Mammary epithelial cell (primary cell): ENCODE measurements at regions of chr1 and their contacts with region 1.

Region 1: GRCh38 chr1:47823040-47823808 is 174.0 kb downstream of the TRABD2B start:
- DNase-seq: no peak
- H3K4me3 ChIP-seq: no peak overlapping the region
- H3K27ac ChIP-seq: no peak overlapping the region
- H3K4me1 ChIP-seq: no peaks in the 10 kb centered on the region
- H3K27me3 ChIP-seq: no peaks in the 10 kb centered on the region
- CTCF ChIP-seq: no peak

Region 2: DNA sequence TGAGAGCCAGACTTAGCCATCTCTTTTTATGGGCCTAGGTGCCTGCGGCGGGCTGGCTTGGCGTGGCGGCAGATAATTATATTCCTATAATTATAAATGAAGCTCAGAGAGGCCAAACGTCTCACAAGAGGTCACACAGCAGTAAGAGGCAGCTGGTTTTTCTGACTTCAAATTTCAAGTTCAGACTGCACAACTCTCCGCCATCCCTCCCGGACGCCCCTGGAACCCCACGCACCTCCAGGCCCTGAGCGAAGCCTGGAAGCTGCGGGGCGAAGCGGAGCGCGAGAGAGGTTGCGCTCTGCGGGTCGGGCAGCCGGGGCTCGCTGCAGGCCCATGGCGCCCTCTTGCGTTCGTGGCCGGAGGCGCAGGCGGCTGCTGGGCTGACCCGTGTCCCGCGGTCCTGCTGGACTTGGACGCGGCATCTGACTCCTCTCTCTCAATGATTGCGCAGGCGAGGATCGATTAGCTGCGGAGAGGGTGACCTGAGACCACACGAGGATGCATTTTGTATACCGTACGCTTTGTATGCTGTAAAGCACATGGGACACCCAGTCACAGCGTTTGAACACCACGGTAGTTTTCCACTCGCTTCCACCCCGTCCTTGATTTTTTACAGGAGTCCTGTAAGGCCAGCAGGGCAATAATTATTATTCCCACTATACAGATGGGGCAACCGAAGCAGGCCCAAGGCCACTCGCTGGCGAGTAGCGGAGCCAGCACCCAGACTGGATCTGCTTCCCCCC is 112.7 kb before region 1 on chr1:
- CTCF ChIA-PET with region 1: no interaction called
- dilution Hi-C with region 1: no loop called
- in situ Hi-C with region 1: no loop called
- intact Hi-C with region 1: no loop called
- DNase-seq: peak; percentile 41
- H3K4me3 ChIP-seq: no peak overlapping the region
- H3K27ac ChIP-seq: no peak overlapping the region
- H3K4me1 ChIP-seq: peaks cover 23% of the 10 kb centered on the region
- H3K27me3 ChIP-seq: peaks cover 29% of the 10 kb centered on the region
- CTCF ChIP-seq: peak; percentile 87 to 100

Region 3: DNA sequence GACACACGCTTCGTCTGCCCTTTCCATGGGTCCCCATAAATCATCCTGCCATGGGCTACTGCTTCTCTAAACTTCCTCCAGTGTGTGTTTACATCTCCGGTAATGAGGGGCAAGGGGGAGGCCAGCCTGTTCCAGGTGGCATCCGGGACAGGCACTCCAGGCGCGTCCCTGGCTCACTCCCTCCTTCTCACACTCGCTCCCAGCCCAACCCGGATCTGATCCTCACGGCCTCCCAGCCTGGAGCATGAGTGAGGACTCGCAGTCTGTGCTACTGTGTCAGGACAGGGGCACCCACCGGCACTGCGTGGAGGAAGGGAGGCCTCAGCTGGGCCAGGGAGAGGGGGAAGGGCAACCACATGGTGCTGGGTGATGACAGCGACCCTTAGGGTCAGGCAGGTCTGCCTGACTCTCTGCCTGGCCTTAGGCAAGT is 51.5 kb before region 1 on chr1:
- CTCF ChIA-PET with region 1: no interaction called
- dilution Hi-C with region 1: loop called (anchors 5 kb)
- in situ Hi-C with region 1: no loop called
- intact Hi-C with region 1: no loop called
- DNase-seq: no peak
- H3K4me3 ChIP-seq: no peak overlapping the region
- H3K27ac ChIP-seq: no peak overlapping the region
- H3K4me1 ChIP-seq: no peaks in the 10 kb centered on the region
- H3K27me3 ChIP-seq: no peaks in the 10 kb centered on the region
- CTCF ChIP-seq: no peak

Region 4: GRCh38 chr1:47931394-47931793 is 108.2 kb after region 1 on chr1:
- CTCF ChIA-PET with region 1: no interaction called
- dilution Hi-C with region 1: no loop called
- in situ Hi-C with region 1: no loop called
- intact Hi-C with region 1: no loop called
- DNase-seq: peak; percentile 56
- H3K4me3 ChIP-seq: no peak overlapping the region
- H3K27ac ChIP-seq: no peak overlapping the region
- H3K4me1 ChIP-seq: peaks cover 12% of the 10 kb centered on the region
- H3K27me3 ChIP-seq: no peaks in the 10 kb centered on the region
- CTCF ChIP-seq: peak; percentile 50 to 58